GM23248 (cell line): ENCODE measurements at regions of chr20 and their contacts with region 1.

Region 1: DNA sequence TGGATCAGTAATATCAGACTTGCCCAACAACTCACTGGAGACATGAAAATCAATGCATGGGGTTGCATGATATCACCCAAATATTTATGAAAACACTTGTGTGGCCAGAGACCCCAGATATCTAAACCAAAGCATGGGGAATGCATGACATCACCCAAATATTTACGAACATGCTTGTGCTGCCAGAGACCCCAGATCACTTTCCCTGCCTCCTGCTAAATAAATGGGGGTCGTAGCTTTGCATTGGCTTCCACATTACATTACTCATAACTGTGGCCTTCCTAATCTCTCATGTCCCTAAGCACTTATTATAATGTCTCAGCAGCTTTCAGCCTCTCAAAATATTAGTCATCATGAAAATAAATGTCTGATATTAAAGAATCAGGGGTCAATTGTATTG is 838.0 kb upstream of the DEFB115 start:
- DNase-seq: no peak
- H3K4me3 ChIP-seq: no peak overlapping the region
- H3K27ac ChIP-seq: no peak overlapping the region
- H3K4me1 ChIP-seq: no peaks in the 10 kb centered on the region
- H3K27me3 ChIP-seq: no peaks in the 10 kb centered on the region

Region 2: DNA sequence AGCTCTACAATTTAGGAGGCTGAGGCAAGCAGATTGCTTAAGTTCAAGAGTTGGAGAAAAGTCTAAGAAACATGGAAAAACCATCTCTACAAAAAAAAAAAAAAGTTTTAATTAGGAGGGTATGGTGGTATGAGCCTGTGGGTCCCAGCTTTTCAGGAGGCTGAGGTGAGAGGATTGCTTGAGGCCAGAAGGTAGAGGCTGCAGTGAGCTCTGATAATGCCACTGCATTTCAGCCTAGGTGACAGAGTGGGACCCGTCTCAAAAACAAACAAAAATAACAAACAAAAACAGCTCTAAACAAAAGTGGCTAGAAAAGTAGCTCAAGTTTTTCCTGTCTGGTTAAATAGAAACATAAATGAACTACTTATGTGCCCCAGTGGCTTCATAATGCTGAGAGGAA is 1295.6 kb before region 1 on chr20:
- in situ Hi-C with region 1: loop called (anchors 25 kb)
- DNase-seq: no peak
- H3K4me3 ChIP-seq: no peak overlapping the region
- H3K27ac ChIP-seq: no peak overlapping the region
- H3K4me1 ChIP-seq: no peaks in the 10 kb centered on the region
- H3K27me3 ChIP-seq: no peaks in the 10 kb centered on the region